Mammary epithelial cell (primary cell): ENCODE measurements at regions of chr1 and their contacts with region 1.

Region 1: GRCh38 chr1:77081834-77082233 is 137.4 kb downstream of the PIGK start:
- DNase-seq: no peak
- H3K4me3 ChIP-seq: no peak overlapping the region
- H3K27ac ChIP-seq: no peak overlapping the region
- H3K4me1 ChIP-seq: no peaks in the 10 kb centered on the region
- H3K27me3 ChIP-seq: no peaks in the 10 kb centered on the region
- CTCF ChIP-seq: no peak

Region 2: DNA sequence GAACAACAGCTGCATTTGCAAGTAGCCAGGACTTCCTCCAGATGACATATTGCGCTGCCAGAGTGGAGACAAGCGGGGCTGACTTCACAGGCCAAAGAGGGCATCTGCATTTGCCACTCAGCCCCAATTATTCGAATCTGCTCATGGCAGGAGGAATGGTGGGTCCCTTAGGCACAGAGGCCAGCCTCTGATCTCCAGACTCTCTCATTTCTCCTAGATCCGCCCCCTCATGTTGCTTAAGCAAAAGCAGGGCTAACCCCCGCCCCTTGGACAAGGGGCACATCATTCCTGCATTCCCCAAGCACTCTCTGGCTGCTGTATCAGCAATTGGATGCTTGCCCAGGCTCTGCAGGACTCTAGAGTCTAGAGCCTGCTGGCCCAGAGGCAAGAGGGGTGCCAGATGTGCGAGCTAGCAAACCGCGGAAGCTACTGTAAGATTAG is 744.9 kb before region 1 on chr1:
- CTCF ChIA-PET with region 1: no interaction called
- dilution Hi-C with region 1: no loop called
- in situ Hi-C with region 1: no loop called
- intact Hi-C with region 1: no loop called
- DNase-seq: no peak
- H3K4me3 ChIP-seq: no peak overlapping the region
- H3K27ac ChIP-seq: no peak overlapping the region
- H3K4me1 ChIP-seq: no peaks in the 10 kb centered on the region
- H3K27me3 ChIP-seq: no peaks in the 10 kb centered on the region
- CTCF ChIP-seq: no peak

Region 3: GRCh38 chr1:77024500-77024899 is 57.3 kb before region 1 on chr1:
- CTCF ChIA-PET with region 1: no interaction called
- dilution Hi-C with region 1: loop called (anchors 10 kb)
- in situ Hi-C with region 1: no loop called
- intact Hi-C with region 1: no loop called
- DNase-seq: no peak
- H3K4me3 ChIP-seq: no peak overlapping the region
- H3K27ac ChIP-seq: no peak overlapping the region
- H3K4me1 ChIP-seq: no peaks in the 10 kb centered on the region
- H3K27me3 ChIP-seq: no peaks in the 10 kb centered on the region
- CTCF ChIP-seq: no peak